A673 (cell line): ENCODE measurements at regions of chr1 and their contacts with region 1.

Region 1: DNA sequence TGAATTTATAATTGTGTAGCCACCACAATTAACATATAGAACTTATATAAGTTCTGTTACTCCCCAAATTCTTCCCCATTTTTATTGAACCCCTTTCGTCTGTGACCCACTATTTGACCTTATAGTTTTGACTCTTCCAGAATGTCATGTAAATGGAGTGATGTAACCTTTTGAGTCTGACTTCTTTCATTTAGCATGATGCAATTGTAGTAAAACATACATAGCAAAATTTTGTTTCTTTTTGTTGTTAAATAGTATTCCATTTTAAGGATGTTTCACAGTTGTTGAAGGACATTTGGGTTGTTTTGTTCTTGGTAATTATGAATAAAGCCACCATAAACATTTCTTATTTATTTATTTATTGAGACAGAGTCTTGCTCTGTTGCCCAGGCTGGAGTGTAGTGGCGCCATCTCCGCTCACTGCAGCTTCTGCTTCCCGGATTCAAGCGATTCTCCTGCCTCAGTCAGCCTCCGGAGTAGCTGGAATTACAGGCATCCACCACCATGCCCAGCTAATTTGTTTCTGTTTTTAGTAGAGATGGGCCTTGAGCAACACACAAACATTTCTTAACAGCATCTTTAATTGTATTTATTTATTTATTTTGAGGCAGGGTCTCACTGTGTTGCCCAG is 33.6 kb downstream of the RPRD2 start:
- DNase-seq: no peak
- H3K4me3 ChIP-seq: no peak overlapping the region
- H3K27ac ChIP-seq: no peak overlapping the region
- H3K4me1 ChIP-seq: no peaks in the 10 kb centered on the region
- H3K27me3 ChIP-seq: no peaks in the 10 kb centered on the region
- CTCF ChIP-seq: no peak

Region 2: GRCh38 chr1:150429805-150430204 is 32.3 kb after region 1 on chr1:
- CTCF ChIA-PET with region 1: no interaction called
- POLR2A ChIA-PET with region 1: no interaction called
- intact Hi-C with region 1: loop called (anchors 5 kb)
- DNase-seq: peak; percentile 30
- H3K4me3 ChIP-seq: no peak overlapping the region
- H3K27ac ChIP-seq: no peak overlapping the region
- H3K4me1 ChIP-seq: no peaks in the 10 kb centered on the region
- H3K27me3 ChIP-seq: no peaks in the 10 kb centered on the region
- CTCF ChIP-seq: peak; percentile 38

Region 3: DNA sequence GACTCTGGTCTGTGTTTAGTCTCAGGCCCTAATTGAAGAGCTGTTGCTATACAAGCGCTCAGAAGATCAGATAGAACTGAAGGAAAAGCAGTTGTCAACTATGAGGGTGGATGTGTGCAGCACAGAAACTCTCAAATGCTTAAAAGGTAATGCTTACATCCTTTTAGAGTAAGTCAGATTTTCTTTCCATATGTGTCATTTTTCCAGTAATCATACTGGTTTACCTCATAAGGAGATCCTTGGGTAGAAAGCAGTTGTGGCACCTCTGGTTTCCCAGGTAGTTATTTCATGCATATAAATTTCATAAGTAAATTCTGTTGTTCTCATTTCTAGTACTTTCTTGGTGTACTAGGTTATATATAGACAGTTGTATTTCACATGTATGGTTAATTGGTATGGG is 46.7 kb after region 1 on chr1:
- CTCF ChIA-PET with region 1: interaction called, 10 read pairs
- POLR2A ChIA-PET with region 1: no interaction called
- intact Hi-C with region 1: no loop called
- DNase-seq: no peak
- H3K4me3 ChIP-seq: no peak overlapping the region
- H3K27ac ChIP-seq: no peak overlapping the region
- H3K4me1 ChIP-seq: no peaks in the 10 kb centered on the region
- H3K27me3 ChIP-seq: no peaks in the 10 kb centered on the region
- CTCF ChIP-seq: no peak